ENCODE measurements at regions of chr20 and their contacts with region 1.

Region 1: GRCh38 chr20:18632196-18633009 is 44.5 kb downstream of the DTD1 start:
- DNase-seq: peak; percentile 81
- ATAC-seq: peak; percentile 92
- H3K4me3 Mint-ChIP-seq: no peak overlapping the region
- H3K27ac Mint-ChIP-seq: peak overlapping the region; percentile 40; the same call in 1 of the 2 replicates
- H3K4me1 Mint-ChIP-seq: peaks cover 4% of the 10 kb centered on the region
- H3K27me3 Mint-ChIP-seq: no peaks in the 10 kb centered on the region
- CTCF ChIP-seq: peak; percentile 86

Region 2: DNA sequence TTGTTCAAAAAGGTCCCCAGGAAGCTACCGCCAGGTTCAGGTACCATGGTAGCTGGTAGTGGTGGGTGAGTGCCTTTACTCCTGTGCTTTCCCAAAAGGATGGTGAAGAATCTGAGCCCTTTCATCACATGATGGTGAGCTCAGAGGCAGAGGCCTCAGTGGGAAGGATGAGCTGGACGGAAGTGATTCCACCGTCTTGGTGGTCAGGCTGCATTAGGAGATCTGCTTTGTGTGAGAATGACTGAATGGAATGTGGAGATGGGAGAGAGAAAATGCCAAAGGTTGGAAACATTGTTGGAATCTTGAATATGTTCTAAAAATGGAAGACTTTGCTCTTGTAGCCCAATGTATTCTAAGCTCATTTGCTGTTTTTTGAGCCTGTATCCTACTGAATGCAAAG is 73.1 kb after region 1 on chr20:
- CTCF ChIA-PET with region 1: interaction called, 10 read pairs
- POLR2A ChIA-PET with region 1: no interaction called
- DNase-seq: no peak
- ATAC-seq: no peak
- H3K4me3 Mint-ChIP-seq: no peak overlapping the region
- H3K27ac Mint-ChIP-seq: no peak overlapping the region
- H3K4me1 Mint-ChIP-seq: peaks cover 20% of the 10 kb centered on the region
- H3K27me3 Mint-ChIP-seq: no peaks in the 10 kb centered on the region; the same call in 1 of the 2 replicates
- CTCF ChIP-seq: no peak

Region 3: DNA sequence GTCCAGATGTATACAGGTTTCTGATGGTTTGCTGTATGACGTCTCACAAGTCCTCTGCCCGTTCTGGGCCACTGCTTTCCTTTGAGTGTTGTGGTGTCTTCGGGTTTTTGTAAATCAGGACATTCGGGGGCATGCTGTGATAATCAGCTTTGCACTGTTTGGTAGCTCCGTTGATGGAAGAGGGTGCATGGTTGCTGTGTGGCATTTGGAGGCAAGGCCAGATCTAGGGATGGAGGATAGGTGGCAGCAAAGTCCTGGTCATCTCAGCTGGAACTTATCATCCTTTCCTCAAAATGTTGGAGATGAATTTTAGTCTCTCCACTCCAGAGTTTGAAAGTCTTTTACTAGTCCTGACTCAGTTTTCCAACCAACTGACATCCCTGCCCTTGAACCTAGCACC is 272.2 kb after region 1 on chr20:
- CTCF ChIA-PET with region 1: interaction called, 14 read pairs
- POLR2A ChIA-PET with region 1: no interaction called
- DNase-seq: peak; percentile 13
- ATAC-seq: peak; percentile 62; the same call in 1 of the 2 replicates
- H3K4me3 Mint-ChIP-seq: no peak overlapping the region
- H3K27ac Mint-ChIP-seq: no peak overlapping the region
- H3K4me1 Mint-ChIP-seq: peaks cover 37% of the 10 kb centered on the region
- H3K27me3 Mint-ChIP-seq: no peaks in the 10 kb centered on the region; the same call in 1 of the 2 replicates
- CTCF ChIP-seq: no peak

Region 4: DNA sequence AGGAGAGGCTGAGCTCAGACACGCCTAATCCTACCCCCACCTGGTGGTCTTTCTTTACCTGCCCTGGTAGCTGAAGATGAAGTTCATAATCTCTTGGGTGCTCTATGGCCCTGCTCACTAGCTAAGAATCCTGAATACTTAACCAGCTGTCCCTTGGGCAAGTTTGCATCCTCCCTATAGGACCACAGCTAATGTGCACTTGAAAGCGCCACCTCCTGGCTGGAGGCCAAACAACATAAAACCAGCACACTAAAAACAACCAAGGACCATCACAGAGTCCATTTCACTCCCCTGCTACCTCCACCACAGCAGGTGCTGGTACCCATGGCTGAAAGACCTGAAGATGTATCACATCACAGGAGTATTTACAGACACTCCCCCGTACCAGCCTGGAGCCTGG is 424.5 kb after region 1 on chr20:
- CTCF ChIA-PET with region 1: interaction called, 10 read pairs
- POLR2A ChIA-PET with region 1: no interaction called
- DNase-seq: peak; percentile 25
- ATAC-seq: no peak
- H3K4me3 Mint-ChIP-seq: no peak overlapping the region
- H3K27ac Mint-ChIP-seq: no peak overlapping the region
- H3K4me1 Mint-ChIP-seq: no peaks in the 10 kb centered on the region
- H3K27me3 Mint-ChIP-seq: peaks cover 10% of the 10 kb centered on the region
- CTCF ChIP-seq: no peak

Measured in WTC11 (cell line).